ENCODE measurements at regions of chr14 and their contacts with region 1.

Region 1: GRCh38 chr14:35404449-35405303 is at the start of gene NFKBIA:
- DNase-seq: peak; percentile 79 to 88
- ATAC-seq: peak; percentile 80 to 81
- H3K4me3 ChIP-seq: peak within 1 kb of the TSS; percentile 97
- H3K27ac ChIP-seq: peak within 1 kb of the TSS; percentile 99
- H3K4me1 ChIP-seq: peaks cover 53% of the 10 kb centered on the region
- CTCF ChIP-seq: peak; percentile 48
- EP300 ChIP-seq: no peak
- POLR2A ChIP-seq: peak; percentile 94
- RAD21 ChIP-seq: peak in 1 of 2 experiments; percentile 46; a peak in 2 of 5 replicates
- polyA plus RNA-seq, gene NFKBIA: 65.0 and 102 TPM in 2 replicates

Region 2: GRCh38 chr14:34982417-34983147 is 422.1 kb before region 1 on chr14 and contains the start of gene SRP54:
- CTCF ChIA-PET with region 1: interaction called, 4 read pairs
- POLR2A ChIA-PET with region 1: interaction called, 11 read pairs
- DNase-seq: peak; percentile 90 to 99
- ATAC-seq: peak; percentile 90
- H3K4me3 ChIP-seq: peak within 1 kb of the TSS; percentile 84
- H3K27ac ChIP-seq: peak within 1 kb of the TSS; percentile 91 to 96
- H3K4me1 ChIP-seq: peaks cover 19% of the 10 kb centered on the region; the same call in 2 of the 3 replicates
- CTCF ChIP-seq: no peak
- EP300 ChIP-seq: no peak
- POLR2A ChIP-seq: peak; percentile 98
- RAD21 ChIP-seq: no peak; a peak in 1 of 5 replicates
- polyA plus RNA-seq, gene SRP54: 62.5 and 103 TPM in 2 replicates

Region 3: DNA sequence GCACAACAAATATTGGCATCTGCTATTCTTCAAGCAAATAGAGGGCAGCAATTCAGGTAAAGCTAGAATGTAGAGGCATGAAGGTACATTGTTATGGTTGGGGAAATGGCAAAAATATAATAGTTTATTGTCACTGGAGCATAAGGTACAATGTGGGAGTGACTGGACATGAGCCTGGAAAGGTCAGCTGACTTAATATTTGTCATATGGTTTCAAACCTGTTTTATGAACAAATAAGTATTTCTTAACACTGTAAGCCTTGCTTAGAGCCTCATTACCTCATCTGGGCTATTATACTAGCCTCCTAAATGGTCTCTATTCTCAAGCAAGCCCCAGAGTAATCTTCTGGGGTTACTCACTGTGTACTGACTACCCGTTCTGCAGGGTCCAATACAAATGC is 324.9 kb before region 1 on chr14:
- CTCF ChIA-PET with region 1: no interaction called
- POLR2A ChIA-PET with region 1: no interaction called
- DNase-seq: no peak
- ATAC-seq: no peak
- H3K4me3 ChIP-seq: no peak overlapping the region
- H3K27ac ChIP-seq: no peak overlapping the region
- H3K4me1 ChIP-seq: no peaks in the 10 kb centered on the region
- CTCF ChIP-seq: no peak
- EP300 ChIP-seq: no peak
- POLR2A ChIP-seq: no peak
- RAD21 ChIP-seq: no peak

Region 4: GRCh38 chr14:35121887-35122695 is 282.6 kb before region 1 on chr14 and contains the starts of genes PPP2R3C and PRORP:
- CTCF ChIA-PET with region 1: no interaction called
- POLR2A ChIA-PET with region 1: interaction called, 16 read pairs
- DNase-seq: peak; percentile 74 to 99
- ATAC-seq: peak; percentile 94 to 96
- H3K4me3 ChIP-seq: peak within 1 kb of the TSS; percentile 90
- H3K27ac ChIP-seq: peak within 1 kb of the TSS; percentile 97 to 99
- H3K4me1 ChIP-seq: peaks cover 11% of the 10 kb centered on the region; the same call in 1 of the 3 replicates
- CTCF ChIP-seq: no peak
- EP300 ChIP-seq: no peak
- POLR2A ChIP-seq: peak; percentile 26; the same call in 1 of the 2 replicates
- RAD21 ChIP-seq: no peak
- polyA plus RNA-seq, gene PPP2R3C: 24.1 and 32.1 TPM in 2 replicates
- polyA plus RNA-seq, gene PRORP: 38.8 and 40.0 TPM in 2 replicates

Region 5: GRCh38 chr14:35229495-35230089 is 175.1 kb before region 1 on chr14:
- CTCF ChIA-PET with region 1: interaction called, 8 read pairs
- POLR2A ChIA-PET with region 1: interaction called, 10 read pairs
- DNase-seq: peak in 1 of 2 experiments; percentile 50
- ATAC-seq: peak; percentile 47 to 69; a peak in 4 of 6 replicates
- H3K4me3 ChIP-seq: no peak overlapping the region
- H3K27ac ChIP-seq: no peak overlapping the region; a peak in 1 of 6 replicates
- H3K4me1 ChIP-seq: peaks cover 9% of the 10 kb centered on the region; the same call in 2 of the 3 replicates
- CTCF ChIP-seq: peak; percentile 51
- EP300 ChIP-seq: no peak
- POLR2A ChIP-seq: no peak
- RAD21 ChIP-seq: peak; percentile 64 to 66

Region 6: GRCh38 chr14:35304812-35305462 is 99.7 kb before region 1 on chr14:
- CTCF ChIA-PET with region 1: interaction called, 14 read pairs
- POLR2A ChIA-PET with region 1: no interaction called
- DNase-seq: no peak
- ATAC-seq: no peak
- H3K4me3 ChIP-seq: no peak overlapping the region
- H3K27ac ChIP-seq: no peak overlapping the region
- H3K4me1 ChIP-seq: no peaks in the 10 kb centered on the region
- CTCF ChIP-seq: no peak
- EP300 ChIP-seq: no peak
- POLR2A ChIP-seq: no peak
- RAD21 ChIP-seq: no peak

Region 7: DNA sequence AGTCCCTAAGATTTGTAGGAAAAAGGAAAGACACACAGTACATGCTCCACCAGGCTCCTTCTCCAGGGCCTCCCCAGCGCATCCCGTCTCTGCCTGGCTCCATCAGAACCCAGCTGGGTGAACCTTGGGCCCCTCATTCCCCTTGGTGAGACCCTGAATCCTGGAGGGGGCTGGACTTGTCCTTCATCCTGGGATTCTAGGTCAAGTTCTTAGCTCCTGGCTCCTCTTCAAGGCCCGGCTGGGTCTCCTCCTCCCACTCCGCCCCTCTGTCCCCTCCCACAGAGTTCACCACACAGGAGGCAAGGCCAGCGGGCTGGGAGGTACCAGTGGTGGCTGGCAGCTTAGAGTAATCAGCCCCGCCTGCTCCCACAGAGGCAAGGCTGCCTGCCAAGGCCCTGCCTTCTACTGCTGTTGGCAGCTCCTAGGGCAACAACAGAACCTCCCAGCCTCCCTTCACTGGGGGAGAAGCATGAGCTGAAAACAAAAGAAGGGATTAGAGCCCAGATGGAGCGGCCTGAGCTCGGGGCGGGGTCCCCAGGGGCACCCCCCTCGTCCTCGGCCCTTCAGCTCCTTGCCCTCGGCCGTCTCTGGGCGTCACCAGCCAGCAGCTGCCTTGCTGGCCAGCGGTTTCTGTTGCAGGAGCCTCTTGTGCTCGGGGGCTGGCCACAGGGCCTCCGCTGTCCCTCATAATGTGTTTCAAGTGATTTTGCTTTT is 63.1 kb before region 1 on chr14:
- CTCF ChIA-PET with region 1: interaction called, 7 read pairs
- POLR2A ChIA-PET with region 1: interaction called, 45 read pairs
- DNase-seq: peak; percentile 87 to 93
- ATAC-seq: peak; percentile 92 to 95
- H3K4me3 ChIP-seq: peak overlapping the region; percentile 30; the same call in 2 of the 3 replicates
- H3K27ac ChIP-seq: peak overlapping the region; percentile 91 to 95
- H3K4me1 ChIP-seq: peaks cover 50% of the 10 kb centered on the region
- CTCF ChIP-seq: no peak
- EP300 ChIP-seq: no peak
- POLR2A ChIP-seq: peak; percentile 63
- RAD21 ChIP-seq: peak in 1 of 2 experiments; percentile 19; a peak in 2 of 5 replicates

Region 8: GRCh38 chr14:35385042-35385839 is 19.4 kb before region 1 on chr14:
- CTCF ChIA-PET with region 1: interaction called, 4 read pairs
- POLR2A ChIA-PET with region 1: interaction called, 21 read pairs
- DNase-seq: peak; percentile 56 to 89
- ATAC-seq: peak; percentile 84 to 87
- H3K4me3 ChIP-seq: no peak overlapping the region
- H3K27ac ChIP-seq: peak overlapping the region; percentile 89 to 97
- H3K4me1 ChIP-seq: peaks cover 47% of the 10 kb centered on the region
- CTCF ChIP-seq: no peak
- EP300 ChIP-seq: peak in 1 of 2 experiments; percentile 62; a peak in 2 of 5 replicates
- POLR2A ChIP-seq: no peak
- RAD21 ChIP-seq: no peak

Region 9: GRCh38 chr14:35438910-35439713 is 34.4 kb after region 1 on chr14:
- CTCF ChIA-PET with region 1: no interaction called
- POLR2A ChIA-PET with region 1: no interaction called
- DNase-seq: peak in 1 of 2 experiments; percentile 22
- ATAC-seq: peak in 1 of 2 experiments; percentile 71; a peak in 3 of 6 replicates
- H3K4me3 ChIP-seq: no peak overlapping the region
- H3K27ac ChIP-seq: no peak overlapping the region
- H3K4me1 ChIP-seq: peaks cover 10% of the 10 kb centered on the region; the same call in 2 of the 3 replicates
- CTCF ChIP-seq: peak; percentile 53
- EP300 ChIP-seq: no peak
- POLR2A ChIP-seq: no peak
- RAD21 ChIP-seq: peak; percentile 41 to 46; a peak in 3 of 5 replicates

Region 10: DNA sequence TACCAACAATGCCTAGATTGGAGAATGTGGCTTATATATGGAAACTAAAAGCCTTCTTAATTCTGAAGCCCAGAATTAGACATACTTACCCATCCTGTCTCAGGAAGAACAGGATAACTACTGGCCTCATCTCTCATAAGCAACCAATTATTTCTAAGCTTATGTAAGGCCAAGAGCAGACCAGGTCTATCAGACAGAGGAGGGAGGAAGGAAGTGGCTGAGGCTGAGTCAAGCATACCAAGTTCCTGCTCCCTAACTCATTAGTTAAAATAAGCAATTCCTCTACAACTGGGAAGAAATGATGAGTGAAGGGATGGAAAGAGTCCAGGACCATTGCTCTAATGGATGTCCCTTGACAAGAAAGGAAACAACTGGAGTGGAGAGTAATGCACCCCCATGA is 102.3 kb after region 1 on chr14:
- CTCF ChIA-PET with region 1: no interaction called
- POLR2A ChIA-PET with region 1: no interaction called
- DNase-seq: no peak
- ATAC-seq: no peak
- H3K4me3 ChIP-seq: no peak overlapping the region
- H3K27ac ChIP-seq: no peak overlapping the region
- H3K4me1 ChIP-seq: no peaks in the 10 kb centered on the region
- CTCF ChIP-seq: no peak
- EP300 ChIP-seq: no peak
- POLR2A ChIP-seq: no peak
- RAD21 ChIP-seq: no peak

Measured in A549 (cell line).